ENCODE measurements at regions of chr13 and their contacts with region 1.

Region 1: DNA sequence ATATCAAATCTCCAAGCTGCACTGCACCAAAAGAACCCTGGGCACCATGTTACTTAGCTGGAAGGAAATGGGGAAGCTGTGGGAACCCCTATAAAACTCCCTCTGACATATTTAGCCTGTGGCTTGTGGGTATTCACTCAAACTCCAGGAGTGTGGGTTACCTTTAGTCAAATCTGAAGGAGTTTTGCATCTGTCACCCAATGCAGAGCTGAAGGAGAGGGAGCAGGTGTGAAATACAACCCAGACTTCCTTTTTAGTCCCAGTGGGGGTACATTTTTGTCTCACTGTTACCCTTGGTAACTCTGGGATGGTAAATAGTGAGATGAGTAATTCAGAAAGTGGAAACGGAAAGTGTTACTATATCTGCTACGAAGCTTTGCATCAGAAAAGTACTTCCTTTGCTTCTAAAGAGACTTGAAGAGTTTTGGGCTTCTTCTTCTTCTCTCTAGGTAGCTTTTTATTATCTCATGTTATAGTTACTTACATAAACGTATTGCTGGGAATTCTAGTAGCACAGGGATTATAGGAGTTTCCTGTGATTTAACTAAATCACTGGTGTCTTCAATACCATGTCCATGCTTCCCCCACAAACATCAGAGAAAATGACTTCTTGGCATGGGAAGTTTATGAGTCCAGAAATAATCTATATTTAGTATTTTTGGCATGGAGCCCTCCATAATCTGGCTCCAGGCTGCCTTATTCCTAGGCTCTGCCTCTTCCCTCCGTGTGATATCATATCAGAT is 105.9 kb downstream of the AKAP11 start:
- DNase-seq: no peak
- ATAC-seq: peak; percentile 74
- H3K4me3 Mint-ChIP-seq: peak overlapping the region; percentile 60
- H3K27ac Mint-ChIP-seq: peak overlapping the region; percentile 91
- H3K4me1 Mint-ChIP-seq: peaks cover 54% of the 10 kb centered on the region
- H3K27me3 Mint-ChIP-seq: no peaks in the 10 kb centered on the region
- CTCF ChIP-seq: no peak

Region 2: GRCh38 chr13:41193919-41194824 is 1183.6 kb before region 1 on chr13 and contains the start of gene KBTBD7:
- CTCF ChIA-PET with region 1: no interaction called
- POLR2A ChIA-PET with region 1: no interaction called
- intact Hi-C with region 1: loop called (anchors 5 kb)
- DNase-seq: peak; percentile 85
- ATAC-seq: peak; percentile 92
- H3K4me3 Mint-ChIP-seq: peak within 1 kb of the TSS; percentile 93
- H3K27ac Mint-ChIP-seq: peak within 1 kb of the TSS; percentile 94
- H3K4me1 Mint-ChIP-seq: peaks cover 54% of the 10 kb centered on the region
- H3K27me3 Mint-ChIP-seq: no peaks in the 10 kb centered on the region
- CTCF ChIP-seq: no peak
- total RNA-seq, gene KBTBD7: 5.2 and 6.4 TPM in 2 replicates

Region 3: GRCh38 chr13:42333613-42334328 is 44.0 kb before region 1 on chr13:
- CTCF ChIA-PET with region 1: no interaction called
- POLR2A ChIA-PET with region 1: no interaction called
- intact Hi-C with region 1: loop called (anchors 1 kb)
- DNase-seq: no peak
- ATAC-seq: peak; percentile 84
- H3K4me3 Mint-ChIP-seq: no peak overlapping the region
- H3K27ac Mint-ChIP-seq: no peak overlapping the region
- H3K4me1 Mint-ChIP-seq: peaks cover 21% of the 10 kb centered on the region
- H3K27me3 Mint-ChIP-seq: no peaks in the 10 kb centered on the region
- CTCF ChIP-seq: no peak

Region 4: DNA sequence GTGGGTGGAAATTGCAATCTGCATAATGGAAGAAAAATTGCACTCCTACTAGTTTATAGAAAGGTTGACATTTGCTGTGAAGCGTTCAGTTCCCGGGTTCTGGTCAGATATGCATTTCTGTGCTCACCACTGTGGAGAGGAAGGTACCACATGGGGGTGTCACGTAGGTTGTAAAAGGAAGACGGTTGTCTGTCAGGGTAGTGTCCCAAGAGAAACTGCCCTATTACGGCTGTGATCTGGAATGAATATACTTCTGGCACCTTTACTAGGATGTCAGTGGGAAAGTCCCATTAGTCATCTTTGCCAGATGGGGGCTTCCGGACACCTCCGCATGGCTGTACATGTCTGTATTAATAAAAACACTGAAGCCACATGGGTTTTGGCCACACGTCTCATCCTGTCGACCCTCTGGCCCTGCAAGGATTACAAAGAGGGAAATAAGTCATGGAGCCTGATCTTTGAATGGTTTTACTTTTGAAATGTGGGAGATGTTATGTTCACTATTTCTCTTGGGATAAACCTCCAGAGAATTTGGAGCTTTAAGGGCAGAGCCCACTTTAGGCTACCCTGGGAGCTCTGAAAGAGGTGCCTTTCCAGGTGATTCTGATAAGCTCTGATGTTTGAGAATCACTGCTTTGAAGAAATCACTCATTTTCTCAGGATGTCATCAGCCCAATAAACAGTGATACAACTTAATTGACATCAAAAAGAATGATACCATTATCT is 28.0 kb after region 1 on chr13:
- CTCF ChIA-PET with region 1: no interaction called
- POLR2A ChIA-PET with region 1: interaction called, 16 read pairs
- intact Hi-C with region 1: loop called (anchors 1 kb)
- DNase-seq: peak; percentile 30
- ATAC-seq: peak; percentile 81
- H3K4me3 Mint-ChIP-seq: peak overlapping the region; percentile 69
- H3K27ac Mint-ChIP-seq: peak overlapping the region; percentile 86
- H3K4me1 Mint-ChIP-seq: peaks cover 19% of the 10 kb centered on the region
- H3K27me3 Mint-ChIP-seq: no peaks in the 10 kb centered on the region
- CTCF ChIP-seq: no peak

Region 5: GRCh38 chr13:42548731-42549551 is 171.1 kb after region 1 on chr13:
- CTCF ChIA-PET with region 1: no interaction called
- POLR2A ChIA-PET with region 1: no interaction called
- intact Hi-C with region 1: loop called (anchors 1 kb)
- DNase-seq: peak; percentile 22
- ATAC-seq: peak; percentile 85
- H3K4me3 Mint-ChIP-seq: peak overlapping the region; percentile 26
- H3K27ac Mint-ChIP-seq: peak overlapping the region; percentile 27
- H3K4me1 Mint-ChIP-seq: peaks cover 16% of the 10 kb centered on the region
- H3K27me3 Mint-ChIP-seq: no peaks in the 10 kb centered on the region
- CTCF ChIP-seq: no peak

Region 6: GRCh38 chr13:42991892-42992763 is 614.3 kb after region 1 on chr13 and contains the start of gene EPSTI1:
- CTCF ChIA-PET with region 1: no interaction called
- POLR2A ChIA-PET with region 1: no interaction called
- intact Hi-C with region 1: loop called (anchors 5 kb)
- DNase-seq: peak; percentile 69
- ATAC-seq: peak; percentile 85
- H3K4me3 Mint-ChIP-seq: peak within 1 kb of the TSS; percentile 92
- H3K27ac Mint-ChIP-seq: peak within 1 kb of the TSS; percentile 99
- H3K4me1 Mint-ChIP-seq: peaks cover 58% of the 10 kb centered on the region
- H3K27me3 Mint-ChIP-seq: no peaks in the 10 kb centered on the region
- CTCF ChIP-seq: no peak
- total RNA-seq, gene EPSTI1: 30.6 and 32.8 TPM in 2 replicates

Region 7: GRCh38 chr13:43516401-43516833 is 1138.6 kb after region 1 on chr13:
- CTCF ChIA-PET with region 1: no interaction called
- POLR2A ChIA-PET with region 1: no interaction called
- intact Hi-C with region 1: no loop called
- DNase-seq: no peak
- ATAC-seq: no peak
- H3K4me3 Mint-ChIP-seq: no peak overlapping the region
- H3K27ac Mint-ChIP-seq: no peak overlapping the region
- H3K4me1 Mint-ChIP-seq: no peaks in the 10 kb centered on the region
- H3K27me3 Mint-ChIP-seq: peaks cover 2% of the 10 kb centered on the region
- CTCF ChIP-seq: no peak

Measured in activated B cell treated with CpG ODN at 0.5 μM for 24 hours (primary cell).